Brain microvascular endothelial cell (primary cell): ENCODE measurements at regions of chr16 and their contacts with region 1.

Region 1: GRCh38 chr16:81723098-81723723 is 55.9 kb upstream of the PLCG2 start:
- DNase-seq: peak; percentile 77
- H3K4me3 ChIP-seq: no peak overlapping the region
- H3K27ac ChIP-seq: no peak overlapping the region
- H3K27me3 ChIP-seq: peaks cover 3% of the 10 kb centered on the region
- CTCF ChIP-seq: peak; percentile 61

Region 2: DNA sequence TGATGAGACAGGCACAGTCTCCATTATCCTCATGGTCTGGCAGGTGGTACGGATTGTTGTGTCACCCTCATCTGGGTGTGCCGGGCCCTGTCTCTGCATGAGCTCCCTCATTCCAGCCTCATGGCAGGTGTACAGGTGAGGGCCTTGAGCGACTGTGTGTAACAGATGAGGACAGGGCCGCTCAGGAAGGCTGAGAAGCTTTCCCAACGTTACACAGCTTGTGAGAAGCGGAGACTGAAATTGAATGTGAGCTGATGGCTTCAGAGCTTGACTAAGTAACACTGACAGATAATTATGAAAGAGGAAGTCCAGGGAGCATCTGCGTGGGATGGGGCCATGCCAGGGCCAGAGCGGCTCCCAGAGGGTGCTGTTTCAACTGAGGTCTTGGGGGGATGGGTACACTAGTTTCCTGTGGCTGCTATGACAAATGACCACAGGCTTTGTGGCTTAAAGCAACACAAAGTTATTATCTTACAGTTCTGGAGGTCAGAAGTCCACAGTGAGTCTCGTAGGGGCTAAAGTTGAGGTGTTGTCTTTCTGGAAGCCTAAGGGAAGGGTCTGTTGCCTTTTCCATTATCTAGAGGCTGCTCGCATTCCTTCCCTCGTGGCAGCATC is 241.9 kb before region 1 on chr16:
- in situ Hi-C with region 1: loop called (anchors 25 kb)
- DNase-seq: peak; percentile 48
- H3K4me3 ChIP-seq: no peak overlapping the region
- H3K27ac ChIP-seq: peak overlapping the region; percentile 13
- H3K27me3 ChIP-seq: no peaks in the 10 kb centered on the region
- CTCF ChIP-seq: peak; percentile 16

Region 3: DNA sequence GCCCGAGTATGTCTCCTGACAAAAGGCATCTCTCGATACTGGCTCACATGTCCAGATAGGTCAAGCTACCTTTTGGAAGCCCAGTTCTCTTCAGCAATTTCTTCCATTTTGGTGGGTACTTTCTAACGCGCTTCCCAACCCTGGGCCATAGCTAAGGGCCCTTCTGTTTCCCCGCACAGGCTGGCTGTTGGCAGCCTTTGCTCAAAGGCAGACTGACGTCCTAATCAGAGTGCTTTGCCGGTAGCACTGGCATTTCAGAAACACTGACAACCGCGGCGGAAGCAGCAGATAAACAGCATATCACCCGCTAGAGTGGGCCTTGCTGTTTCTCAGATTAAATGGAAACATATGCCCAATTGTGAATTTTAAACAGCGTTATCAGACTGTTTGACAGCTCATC is 496.1 kb after region 1 on chr16:
- in situ Hi-C with region 1: no loop called
- DNase-seq: no peak
- H3K4me3 ChIP-seq: no peak overlapping the region
- H3K27ac ChIP-seq: no peak overlapping the region
- H3K27me3 ChIP-seq: no peaks in the 10 kb centered on the region
- CTCF ChIP-seq: no peak